Head of caudate nucleus (tissue), 42 donors: ENCODE measurements at regions of chr10 and their contacts with region 1.

Region 1: DNA sequence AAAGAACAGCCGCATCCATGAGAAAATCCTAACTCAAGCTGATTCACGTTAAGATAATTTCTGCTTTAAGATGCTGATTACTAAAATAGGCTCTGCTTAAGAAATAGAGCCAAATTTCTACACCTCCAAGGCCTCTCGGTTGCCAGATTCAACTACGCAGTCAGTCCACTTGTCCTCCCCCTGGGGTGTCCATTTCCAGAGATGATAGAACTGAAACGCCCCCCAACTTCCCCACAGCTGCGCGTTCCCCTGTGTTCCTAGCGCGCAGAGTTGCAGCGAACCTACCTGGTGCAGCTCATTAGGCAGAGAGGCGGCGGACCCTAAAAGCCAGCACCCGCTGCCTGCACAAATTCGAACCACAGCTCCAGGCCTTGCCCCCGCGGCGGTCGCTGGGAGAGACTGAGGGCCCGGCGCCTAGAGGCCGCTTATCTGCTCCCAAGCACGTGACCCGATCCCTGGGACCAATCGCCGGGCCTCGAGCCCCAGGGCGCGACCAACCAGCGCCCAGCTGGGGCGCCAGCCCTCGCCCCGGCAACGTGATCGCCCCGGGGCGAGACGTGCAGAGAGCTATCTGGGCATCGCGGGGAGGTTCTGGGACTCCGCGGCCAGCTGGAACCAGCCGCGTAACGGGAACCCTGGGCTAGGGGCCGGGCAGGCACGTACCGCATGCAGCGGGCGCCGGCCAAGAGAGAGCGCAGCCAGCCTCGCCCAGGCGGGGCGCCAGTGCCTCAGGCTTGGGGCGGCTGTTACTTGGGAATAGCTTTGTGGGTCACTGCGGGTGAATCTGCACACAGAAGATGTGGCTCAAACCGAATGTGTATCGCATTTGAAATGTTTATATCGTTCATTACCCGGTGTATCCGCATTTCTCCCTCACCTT is at the start of gene PPP1R3C:
- DNase-seq: peak; percentile 87 to 98 (median 95)

Region 2: DNA sequence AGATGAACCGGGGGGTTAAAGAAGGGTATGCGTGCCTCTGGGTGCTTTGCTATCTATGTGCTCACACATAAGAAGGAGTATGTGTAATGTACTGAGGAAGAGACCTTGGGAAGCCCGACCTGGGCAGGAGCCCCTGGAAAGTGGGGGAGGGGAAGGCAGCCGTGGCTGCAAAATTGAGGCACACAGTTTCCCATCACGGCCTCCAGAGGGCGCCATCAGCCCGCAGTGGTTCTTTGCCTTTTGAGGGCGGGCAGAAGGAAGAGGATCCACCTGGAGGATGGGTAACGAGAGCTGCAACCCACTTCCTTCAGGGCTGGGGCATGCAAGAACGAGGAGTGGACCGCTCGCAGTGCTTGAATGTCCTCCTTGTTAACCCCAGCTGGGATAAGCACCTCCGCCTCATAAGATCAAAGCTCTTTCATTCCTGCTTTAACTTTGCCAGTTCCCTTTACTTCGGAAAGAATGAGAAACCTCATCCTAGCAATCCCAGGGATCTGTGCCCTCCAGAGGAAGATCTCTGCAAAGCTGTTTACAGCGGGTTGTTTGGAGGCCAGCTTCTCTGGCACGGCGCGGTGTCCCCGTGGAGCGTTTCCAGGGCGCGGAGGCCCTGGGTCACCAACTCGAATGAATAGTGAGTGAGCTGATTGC is 334.6 kb before region 1 on chr10:
- intact Hi-C with region 1: loop called (anchors 5 kb)
- DNase-seq: peak; percentile 54 to 91 (median 82)

Region 3: DNA sequence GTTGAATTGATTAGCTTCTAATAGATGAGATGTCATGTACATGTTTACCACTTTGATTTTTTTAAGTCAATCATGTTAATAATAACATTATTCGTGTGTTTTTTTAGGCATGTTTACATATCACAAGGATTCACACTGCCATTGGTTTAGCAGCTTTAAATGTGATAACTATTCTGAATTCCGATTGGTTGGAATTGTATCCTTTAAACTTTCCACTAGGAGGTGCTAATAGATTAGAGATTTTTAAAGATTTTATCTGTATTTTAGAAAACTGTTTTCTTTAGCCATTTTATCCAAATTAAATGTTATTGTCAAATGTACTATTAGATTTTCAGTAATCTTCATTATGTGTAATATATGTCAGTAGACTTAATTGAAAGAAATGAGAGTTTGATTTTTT is 139.6 kb before region 1 on chr10:
- intact Hi-C with region 1: loop called (anchors 5 kb)
- DNase-seq: no peak

Region 4: GRCh38 chr10:91797874-91798648 is 165.2 kb after region 1 on chr10 and contains the start of gene TNKS2:
- intact Hi-C with region 1: loop called (anchors 10 kb)
- DNase-seq: peak; percentile 68 to 96 (median 91)

Region 5: GRCh38 chr10:91883549-91884444 is 250.9 kb after region 1 on chr10:
- intact Hi-C with region 1: no loop called
- DNase-seq: peak in 8 of 42 donors; percentile 5 to 39 (median 24)

Region 6: DNA sequence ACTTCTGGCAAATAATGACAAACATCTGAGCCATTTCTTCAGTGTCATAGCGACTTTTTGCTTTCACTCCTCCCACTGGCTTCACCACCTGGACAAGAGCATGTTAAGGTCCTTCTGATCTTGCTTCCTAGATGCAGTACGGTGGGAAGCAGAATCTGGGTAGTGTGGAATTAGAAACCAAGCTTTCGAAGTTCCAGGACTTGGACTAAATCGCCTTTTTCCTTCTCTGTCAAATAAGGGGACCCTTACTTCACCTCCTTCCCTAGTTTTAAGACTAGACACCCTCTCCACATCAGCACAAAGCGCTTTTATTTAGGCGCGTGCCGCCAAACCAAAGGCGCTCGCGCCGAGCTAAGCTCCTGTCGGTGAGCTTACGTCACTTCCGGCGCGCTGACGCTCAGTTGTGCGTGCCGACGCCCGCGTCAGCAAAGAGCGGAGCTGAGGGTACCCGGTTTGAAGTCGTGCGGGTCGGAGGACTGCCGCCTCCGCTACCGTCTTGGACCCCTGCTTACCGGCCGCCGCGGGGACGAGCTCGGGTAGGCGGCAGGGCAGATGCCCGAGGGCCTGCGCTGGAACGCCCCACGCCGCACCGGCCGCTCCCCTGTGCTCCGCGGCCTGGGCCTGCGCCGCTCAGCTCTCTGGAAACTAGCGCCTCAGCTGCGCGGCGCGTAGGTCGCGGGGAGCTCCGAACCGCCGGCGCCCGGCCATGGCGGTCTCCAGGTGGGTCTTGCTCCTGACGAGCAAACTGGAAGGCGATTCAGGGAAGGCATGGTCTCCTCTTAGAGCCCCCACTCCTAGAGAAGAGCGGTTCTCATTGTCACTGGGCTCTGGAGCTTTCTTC is 290.7 kb after region 1 on chr10 and contains the start of gene BTAF1:
- intact Hi-C with region 1: loop called (anchors 5 kb)
- DNase-seq: peak; percentile 84 to 97 (median 95)